Activated CD4-positive, alpha-beta memory T cell treated with anti-CD3 and anti-CD28 coated beads, Interleukin-2, amount 10 ng/mL, durations not matched to agents 7 days and 5 days (primary cell): ENCODE measurements at regions of chr20 and their contacts with region 1.

Region 1: DNA sequence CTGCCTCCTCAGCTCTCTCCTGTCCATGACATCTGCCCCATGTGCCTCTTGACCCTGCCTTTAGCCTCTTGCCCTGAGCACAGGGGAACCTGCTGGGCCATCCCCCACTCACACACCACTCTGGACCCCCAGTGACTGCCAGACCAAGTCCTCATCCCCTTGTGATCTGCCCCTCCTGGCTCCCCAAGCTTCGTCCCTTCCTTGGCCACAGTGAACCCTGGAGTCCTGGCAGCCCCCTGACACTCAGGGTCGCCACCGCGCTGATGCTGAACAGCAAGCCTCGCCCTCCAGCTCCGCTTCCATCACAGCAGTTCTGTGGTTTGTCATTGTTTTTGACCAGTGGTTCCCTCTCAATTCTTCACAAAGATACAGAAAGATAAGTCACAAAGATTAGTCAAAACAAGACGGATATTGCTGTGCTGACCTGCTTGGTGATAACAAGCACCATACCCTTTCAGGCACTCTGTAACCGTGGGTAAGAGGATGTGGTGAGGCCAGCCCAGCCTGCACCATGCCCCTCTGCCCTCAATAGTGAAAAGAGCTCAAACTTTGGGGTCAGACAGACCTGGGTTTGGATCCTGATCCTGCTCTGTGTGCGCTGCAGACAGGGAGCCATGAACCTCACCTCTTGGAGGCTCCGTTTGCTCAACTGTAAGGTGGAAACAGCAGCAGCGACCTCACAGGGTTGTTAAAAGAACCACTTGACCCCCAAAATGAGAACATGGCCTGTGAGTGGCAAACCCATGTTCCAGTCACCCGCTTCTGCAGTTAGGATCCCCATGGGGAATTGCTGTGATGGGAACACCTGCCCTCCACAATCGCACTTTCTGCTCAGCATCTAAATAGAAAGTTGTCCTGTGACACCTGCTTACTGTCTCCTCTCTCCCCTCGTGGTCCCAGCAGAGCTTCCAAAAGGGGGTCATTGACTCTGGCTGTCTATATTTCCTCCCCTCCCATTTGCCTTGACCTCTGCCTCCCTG is 114.5 kb downstream of the TOX2 start:
- DNase-seq: peak; percentile 65
- H3K4me3 Mint-ChIP-seq: peak overlapping the region; percentile 35
- H3K27ac Mint-ChIP-seq: peak overlapping the region; percentile 73
- H3K4me1 Mint-ChIP-seq: peaks cover 57% of the 10 kb centered on the region
- H3K27me3 Mint-ChIP-seq: peaks cover 83% of the 10 kb centered on the region

Region 2: GRCh38 chr20:44018259-44018941 is 10.8 kb before region 1 on chr20:
- CTCF ChIA-PET with region 1: no interaction called
- POLR2A ChIA-PET with region 1: interaction called, 21 read pairs
- DNase-seq: no peak
- H3K4me3 Mint-ChIP-seq: no peak overlapping the region
- H3K27ac Mint-ChIP-seq: no peak overlapping the region
- H3K4me1 Mint-ChIP-seq: peaks cover 25% of the 10 kb centered on the region
- H3K27me3 Mint-ChIP-seq: peaks cover 84% of the 10 kb centered on the region

Region 3: DNA sequence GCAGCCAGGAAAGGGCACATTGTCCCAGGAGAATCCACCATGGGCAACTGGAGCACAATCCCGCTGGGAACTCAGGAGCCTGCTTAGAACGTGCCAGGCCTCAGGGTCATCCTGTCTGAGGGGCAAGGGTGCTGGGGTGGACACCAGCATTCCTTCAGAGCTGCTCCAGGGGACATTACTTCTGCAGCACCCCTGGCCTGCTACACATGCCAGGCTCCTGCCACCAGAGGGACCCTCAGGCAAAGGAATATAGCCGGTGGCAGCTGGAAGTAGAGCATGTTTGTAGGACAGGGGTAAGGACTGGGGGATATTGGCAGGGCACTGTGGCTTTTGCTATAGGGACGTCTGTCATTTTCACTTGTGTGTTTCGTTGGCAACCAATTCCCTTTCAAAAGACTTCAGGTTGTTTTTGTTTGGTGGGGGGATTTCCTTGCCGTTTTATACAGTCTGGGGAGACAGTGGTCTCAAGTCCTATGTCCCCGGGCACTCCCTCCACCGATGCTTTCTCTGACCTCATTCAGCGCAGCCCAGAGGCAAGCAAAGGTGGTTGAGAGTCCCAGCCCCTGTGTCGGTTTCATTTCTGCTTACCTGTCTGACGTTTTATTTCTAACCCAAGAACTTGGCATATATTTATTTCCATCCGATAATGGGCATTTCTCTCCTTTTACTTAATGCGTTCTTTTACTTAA is 27.0 kb after region 1 on chr20:
- CTCF ChIA-PET with region 1: no interaction called
- POLR2A ChIA-PET with region 1: no interaction called
- DNase-seq: peak; percentile 40
- H3K4me3 Mint-ChIP-seq: no peak overlapping the region
- H3K27ac Mint-ChIP-seq: no peak overlapping the region
- H3K4me1 Mint-ChIP-seq: no peaks in the 10 kb centered on the region
- H3K27me3 Mint-ChIP-seq: peaks cover 43% of the 10 kb centered on the region

Region 4: GRCh38 chr20:44115762-44116644 is 86.8 kb after region 1 on chr20:
- CTCF ChIA-PET with region 1: no interaction called
- POLR2A ChIA-PET with region 1: no interaction called
- DNase-seq: no peak
- H3K4me3 Mint-ChIP-seq: no peak overlapping the region
- H3K27ac Mint-ChIP-seq: no peak overlapping the region
- H3K4me1 Mint-ChIP-seq: peaks cover 1% of the 10 kb centered on the region
- H3K27me3 Mint-ChIP-seq: peaks cover 26% of the 10 kb centered on the region